Right cardiac atrium (tissue), 5 donors: ENCODE measurements at regions of chr10 and their contacts with region 1.

Region 1: GRCh38 chr10:69716711-69717560 is 84.8 kb upstream of the COL13A1 start:
- DNase-seq: peak; percentile 45 to 79 (median 69)
- ATAC-seq: peak; percentile 24 to 50
- H3K4me3 ChIP-seq: no peak overlapping the region
- H3K27ac ChIP-seq: no peak overlapping the region
- H3K4me1 ChIP-seq: no peaks in the 10 kb centered on the region
- H3K27me3 ChIP-seq: no peaks in the 10 kb centered on the region

Region 2: DNA sequence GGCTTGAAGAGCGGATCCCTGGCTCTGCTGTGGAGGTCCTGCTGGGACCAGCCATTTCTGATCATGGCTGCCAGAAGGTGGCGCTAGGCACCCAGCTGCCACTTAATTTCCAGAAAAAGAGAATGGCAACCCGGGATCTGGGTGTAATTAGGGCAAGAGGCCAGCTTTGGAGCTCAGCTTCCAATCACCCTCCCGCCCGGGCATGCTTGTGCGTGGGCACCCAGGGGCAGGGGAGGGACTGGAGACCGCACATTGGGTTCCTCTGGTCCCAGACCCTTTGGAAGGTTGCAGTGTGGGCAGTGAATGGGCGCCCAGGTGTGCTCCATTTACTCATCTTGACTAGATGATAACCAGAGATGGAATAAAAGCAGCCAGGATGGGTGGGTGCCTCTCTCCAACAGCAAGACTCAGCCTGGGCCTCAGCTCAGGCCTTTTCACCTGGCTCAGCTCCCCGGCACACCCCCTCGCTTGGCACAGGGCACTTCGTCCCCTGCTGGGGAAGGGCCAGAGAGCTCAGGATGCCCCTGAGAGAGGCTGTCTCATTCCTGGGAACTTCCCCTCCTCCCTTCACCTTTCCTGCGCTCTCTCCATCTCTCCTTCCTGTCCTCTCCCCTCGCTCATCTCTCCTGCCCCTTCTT is 72.2 kb before region 1 on chr10:
- intact Hi-C with region 1: loop called (anchors 2 to 5 kb)
- DNase-seq: peak; percentile 61 to 86 (median 78)
- ATAC-seq: peak; percentile 39 to 65
- H3K4me3 ChIP-seq: no peak overlapping the region
- H3K27ac ChIP-seq: no peak overlapping the region
- H3K4me1 ChIP-seq: no peaks in the 10 kb centered on the region
- H3K27me3 ChIP-seq: no peaks in the 10 kb centered on the region

Region 3: DNA sequence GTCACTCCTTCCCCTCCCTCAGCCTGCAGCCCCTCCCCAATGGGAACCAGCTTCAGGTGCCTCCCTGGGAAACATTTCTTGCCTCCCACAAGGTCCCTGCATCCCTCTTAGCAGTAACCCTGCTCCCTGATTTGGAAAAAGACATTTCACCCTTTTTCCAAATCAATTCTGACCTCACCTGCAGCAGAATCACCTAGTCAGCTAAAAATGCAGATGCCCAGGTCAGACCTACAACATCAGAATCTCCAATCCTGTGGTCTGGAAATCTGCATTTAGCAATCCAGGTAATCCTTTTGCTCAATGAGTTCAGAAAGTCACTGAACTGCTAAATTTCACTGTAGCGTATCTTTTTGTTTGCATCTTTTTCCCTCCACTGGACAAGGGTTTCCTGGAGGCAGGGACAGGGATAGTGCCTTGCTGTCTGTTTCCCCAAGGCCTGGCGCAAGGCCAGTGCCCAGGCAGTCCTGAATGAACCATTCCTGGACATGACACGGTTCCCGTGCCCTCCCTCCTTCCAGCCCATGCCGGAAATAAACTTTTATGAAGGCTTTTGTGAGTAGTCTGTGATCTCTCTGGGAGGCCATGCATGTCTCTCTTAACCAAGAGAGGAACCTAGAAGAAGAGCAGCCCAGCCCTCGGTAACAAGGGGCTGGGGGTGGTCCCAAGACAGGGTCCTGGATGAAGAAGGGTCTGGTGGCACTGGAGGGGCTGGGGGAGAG is 128.8 kb after region 1 on chr10:
- intact Hi-C with region 1: no loop called
- DNase-seq: peak; percentile 64 to 88 (median 82)
- ATAC-seq: peak; percentile 67 to 78
- H3K4me3 ChIP-seq: no peak overlapping the region
- H3K27ac ChIP-seq: peak overlapping the region; percentile 51
- H3K4me1 ChIP-seq: peaks cover 4% of the 10 kb centered on the region
- H3K27me3 ChIP-seq: no peaks in the 10 kb centered on the region

Region 4: DNA sequence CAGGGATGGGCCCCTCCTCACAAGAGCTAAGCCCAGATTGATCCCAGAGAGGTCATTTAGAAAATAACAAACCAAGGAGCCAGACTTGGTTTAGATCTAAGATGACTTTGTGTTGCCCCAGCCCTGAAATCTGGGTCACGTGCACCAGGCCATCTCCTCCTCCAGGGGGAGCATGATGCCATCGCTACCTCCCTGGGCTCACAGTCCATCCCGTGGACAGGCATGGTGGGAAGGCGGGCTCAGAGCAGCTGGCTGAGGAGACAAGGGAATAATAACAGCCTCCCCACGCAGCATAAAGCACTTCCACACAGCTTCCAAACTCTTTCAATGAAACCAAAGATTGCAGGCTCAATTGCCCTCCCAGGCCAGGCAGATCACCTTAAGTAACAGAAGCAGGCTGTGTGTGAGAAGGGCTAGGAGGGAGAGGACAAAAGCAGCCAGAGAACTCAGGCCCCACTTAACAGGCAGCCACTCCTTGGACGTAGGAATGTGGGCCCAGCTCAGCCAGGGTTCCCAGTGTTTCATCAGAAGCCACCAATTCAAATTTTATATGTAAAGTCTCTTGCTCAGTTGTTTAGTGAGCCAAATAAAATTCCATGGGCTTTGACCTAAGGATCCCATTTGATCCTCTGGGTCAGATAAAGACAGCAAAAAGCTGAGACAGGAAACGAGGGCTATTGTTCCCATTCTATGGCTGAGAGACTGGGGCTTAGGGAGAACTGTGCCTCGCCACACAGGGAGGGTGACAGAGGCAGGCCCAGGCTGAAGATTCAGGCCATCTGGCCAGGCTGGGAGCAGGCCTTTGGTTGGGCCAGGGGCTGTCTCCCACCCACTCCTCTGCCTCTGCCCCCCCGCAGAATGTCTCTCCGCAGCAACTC is 184.9 kb after region 1 on chr10:
- intact Hi-C with region 1: loop called in 1 of 4 experiments (anchors 10 kb)
- DNase-seq: peak; percentile 37 to 76 (median 72)
- ATAC-seq: peak; percentile 54 to 64
- H3K4me3 ChIP-seq: no peak overlapping the region
- H3K27ac ChIP-seq: no peak overlapping the region
- H3K4me1 ChIP-seq: peaks cover 12% of the 10 kb centered on the region
- H3K27me3 ChIP-seq: no peaks in the 10 kb centered on the region